Heart left ventricle (tissue), 16 donors: ENCODE measurements at regions of chr1 and their contacts with region 1.

Region 1: DNA sequence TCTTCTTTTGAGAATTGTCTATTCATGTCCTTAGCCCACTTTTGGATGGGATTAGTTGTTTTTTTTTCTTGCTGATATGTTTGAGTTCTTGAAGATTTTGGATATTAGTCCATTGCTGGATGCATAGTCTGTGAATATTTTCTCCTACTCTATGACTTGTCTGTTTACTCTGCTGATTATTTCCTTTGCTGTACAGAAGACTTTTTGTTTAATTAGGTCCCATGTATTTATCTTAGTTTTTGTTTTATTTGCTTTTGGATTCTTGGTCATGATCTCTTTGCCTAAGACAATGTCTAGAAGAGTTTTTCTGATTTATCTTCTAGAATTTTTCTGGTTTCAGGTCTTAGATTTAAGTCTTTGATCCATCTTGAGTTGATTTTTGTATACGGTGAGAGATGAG is 54.8 kb downstream of the GPR137B start:
- DNase-seq: no peak
- ATAC-seq: no peak
- H3K4me3 ChIP-seq: no peak overlapping the region
- H3K27ac ChIP-seq: no peak overlapping the region
- H3K4me1 ChIP-seq: peaks cover 0 to 4% (median 0%) of the 10 kb centered on the region in 12 donors
- H3K27me3 ChIP-seq: no peaks in the 10 kb centered on the region
- CTCF ChIP-seq: no peak
- POLR2A ChIP-seq: no peak

Region 2: GRCh38 chr1:235878082-235878811 is 318.9 kb before region 1 on chr1:
- intact Hi-C with region 1: no loop called
- DNase-seq: peak in 1 of 5 donors; percentile 39
- ATAC-seq: peak; percentile 60 to 87 (median 66)
- H3K4me3 ChIP-seq: no peak overlapping the region
- H3K27ac ChIP-seq: peak overlapping the region in 5 of 12 donors; percentile 14 to 83 (median 35)
- H3K4me1 ChIP-seq: peaks cover 0 to 63% (median 6%) of the 10 kb centered on the region in 12 donors
- H3K27me3 ChIP-seq: no peaks in the 10 kb centered on the region
- CTCF ChIP-seq: no peak
- POLR2A ChIP-seq: no peak

Region 3: DNA sequence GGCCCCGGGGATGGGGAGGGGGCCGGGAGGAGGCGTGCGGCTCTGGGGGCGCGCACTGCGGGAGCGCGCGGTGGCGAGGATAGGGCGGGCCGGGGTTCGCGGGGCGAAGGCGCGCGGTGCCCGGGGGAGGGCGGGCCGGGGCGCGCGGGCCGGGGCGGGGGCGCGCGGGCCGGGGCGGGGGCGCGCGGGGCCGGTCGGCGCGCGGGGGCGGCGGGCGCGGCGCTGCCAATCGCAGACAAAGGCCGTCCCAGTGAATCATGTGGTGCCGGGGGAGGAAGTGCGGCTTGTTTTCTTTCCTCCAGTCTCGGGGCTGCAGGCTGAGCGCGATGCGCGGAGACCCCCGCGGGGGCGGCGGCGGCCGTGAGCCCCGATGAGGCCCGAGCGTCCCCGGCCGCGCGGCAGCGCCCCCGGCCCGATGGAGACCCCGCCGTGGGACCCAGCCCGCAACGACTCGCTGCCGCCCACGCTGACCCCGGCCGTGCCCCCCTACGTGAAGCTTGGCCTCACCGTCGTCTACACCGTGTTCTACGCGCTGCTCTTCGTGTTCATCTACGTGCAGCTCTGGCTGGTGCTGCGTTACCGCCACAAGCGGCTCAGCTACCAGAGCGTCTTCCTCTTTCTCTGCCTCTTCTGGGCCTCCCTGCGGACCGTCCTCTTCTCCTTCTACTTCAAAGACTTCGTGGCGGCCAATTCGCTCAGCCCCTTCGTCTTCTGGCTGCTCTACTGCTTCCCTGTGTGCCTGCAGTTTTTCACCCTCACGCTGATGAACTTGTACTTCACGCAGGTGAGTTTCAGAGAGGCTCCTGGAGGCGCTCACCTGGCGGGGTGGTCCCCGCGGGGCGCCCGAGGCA is 54.7 kb before region 1 on chr1 and contains the start of gene GPR137B:
- intact Hi-C with region 1: no loop called
- DNase-seq: peak; percentile 65 to 74 (median 66)
- ATAC-seq: peak in 3 of 4 donors; percentile 44 to 61 (median 61)
- H3K4me3 ChIP-seq: peak within 1 kb of the TSS; percentile 61 to 98 (median 82)
- H3K27ac ChIP-seq: peak within 1 kb of the TSS in 11 of 12 donors; percentile 6 to 82 (median 70)
- H3K4me1 ChIP-seq: peaks cover 0 to 51% (median 22%) of the 10 kb centered on the region in 12 donors
- H3K27me3 ChIP-seq: peaks cover 0 to 12% (median 0%) of the 10 kb centered on the region in 9 donors
- CTCF ChIP-seq: no peak
- POLR2A ChIP-seq: peak in 1 of 2 donors; percentile 52
- total RNA-seq, gene GPR137B: 27.7 to 49.8 (median 48.4) TPM

Region 4: DNA sequence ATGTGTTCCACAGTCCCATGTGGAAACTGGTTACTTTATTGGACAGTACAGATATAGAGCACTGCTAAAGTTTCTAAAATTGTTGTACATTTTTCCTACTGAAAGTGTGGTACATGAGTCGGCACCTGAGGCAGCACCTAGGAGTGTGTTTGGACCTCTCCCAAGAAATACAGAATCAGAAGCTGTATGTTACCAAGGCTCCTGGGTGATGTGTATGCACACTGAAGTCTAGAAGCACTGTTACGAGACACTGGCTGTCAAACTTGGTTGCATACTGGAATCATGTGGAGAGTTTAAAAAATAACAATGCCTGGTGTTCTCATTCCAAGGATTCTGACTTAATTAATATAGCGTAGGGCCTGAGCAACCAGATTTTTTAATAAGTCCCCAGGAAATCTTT is 37.9 kb after region 1 on chr1:
- intact Hi-C with region 1: loop called in 1 of 10 experiments (anchors 2 kb)
- DNase-seq: no peak
- ATAC-seq: no peak
- H3K4me3 ChIP-seq: no peak overlapping the region
- H3K27ac ChIP-seq: no peak overlapping the region
- H3K4me1 ChIP-seq: no peaks in the 10 kb centered on the region
- H3K27me3 ChIP-seq: no peaks in the 10 kb centered on the region
- CTCF ChIP-seq: no peak
- POLR2A ChIP-seq: no peak